BJ (cell line): ENCODE measurements at regions of chr7 and their contacts with region 1.

Region 1: DNA sequence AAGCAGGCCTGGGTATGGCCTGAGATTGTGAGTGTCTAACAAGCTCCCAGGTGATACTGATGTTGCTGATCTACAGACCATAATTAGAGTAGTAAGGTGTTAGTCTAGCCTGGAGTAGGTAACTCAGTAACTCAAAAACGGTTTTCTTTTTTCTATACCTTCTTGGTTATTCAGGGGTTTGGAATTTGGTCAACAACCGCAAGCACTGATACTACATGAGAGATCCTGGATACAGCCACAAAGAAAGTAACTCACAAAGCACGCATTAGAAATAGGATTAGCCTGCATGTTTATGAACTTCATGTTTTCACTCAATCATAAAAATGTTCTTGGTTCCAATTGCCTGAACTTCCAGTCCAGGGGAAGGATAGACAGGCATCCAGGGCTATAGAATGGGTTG is 803.5 kb downstream of the MAGI2 start:
- DNase-seq: no peak
- H3K4me3 ChIP-seq: no peak overlapping the region
- H3K27me3 ChIP-seq: no peaks in the 10 kb centered on the region
- CTCF ChIP-seq: no peak

Region 2: GRCh38 chr7:78437118-78437517 is 212.9 kb before region 1 on chr7:
- CTCF ChIA-PET with region 1: no interaction called
- POLR2A ChIA-PET with region 1: no interaction called
- DNase-seq: peak; percentile 29
- H3K4me3 ChIP-seq: no peak overlapping the region
- H3K27me3 ChIP-seq: no peaks in the 10 kb centered on the region
- CTCF ChIP-seq: no peak

Region 3: GRCh38 chr7:78558566-78558965 is 91.4 kb before region 1 on chr7:
- CTCF ChIA-PET with region 1: no interaction called
- POLR2A ChIA-PET with region 1: interaction called, 16 read pairs
- DNase-seq: no peak
- H3K4me3 ChIP-seq: no peak overlapping the region
- H3K27me3 ChIP-seq: no peaks in the 10 kb centered on the region
- CTCF ChIP-seq: no peak

Region 4: GRCh38 chr7:78587443-78588044 is 62.4 kb before region 1 on chr7:
- CTCF ChIA-PET with region 1: no interaction called
- POLR2A ChIA-PET with region 1: no interaction called
- DNase-seq: no peak
- H3K4me3 ChIP-seq: no peak overlapping the region
- H3K27me3 ChIP-seq: no peaks in the 10 kb centered on the region
- CTCF ChIP-seq: peak; percentile 21; the same call in 1 of the 2 replicates

Region 5: GRCh38 chr7:78634093-78634492 is 15.9 kb before region 1 on chr7:
- CTCF ChIA-PET with region 1: no interaction called
- POLR2A ChIA-PET with region 1: no interaction called
- DNase-seq: no peak
- H3K4me3 ChIP-seq: no peak overlapping the region
- H3K27me3 ChIP-seq: no peaks in the 10 kb centered on the region
- CTCF ChIP-seq: no peak